GM10248 (cell line): ENCODE measurements at regions of chr21 and their contacts with region 1.

Region 1: DNA sequence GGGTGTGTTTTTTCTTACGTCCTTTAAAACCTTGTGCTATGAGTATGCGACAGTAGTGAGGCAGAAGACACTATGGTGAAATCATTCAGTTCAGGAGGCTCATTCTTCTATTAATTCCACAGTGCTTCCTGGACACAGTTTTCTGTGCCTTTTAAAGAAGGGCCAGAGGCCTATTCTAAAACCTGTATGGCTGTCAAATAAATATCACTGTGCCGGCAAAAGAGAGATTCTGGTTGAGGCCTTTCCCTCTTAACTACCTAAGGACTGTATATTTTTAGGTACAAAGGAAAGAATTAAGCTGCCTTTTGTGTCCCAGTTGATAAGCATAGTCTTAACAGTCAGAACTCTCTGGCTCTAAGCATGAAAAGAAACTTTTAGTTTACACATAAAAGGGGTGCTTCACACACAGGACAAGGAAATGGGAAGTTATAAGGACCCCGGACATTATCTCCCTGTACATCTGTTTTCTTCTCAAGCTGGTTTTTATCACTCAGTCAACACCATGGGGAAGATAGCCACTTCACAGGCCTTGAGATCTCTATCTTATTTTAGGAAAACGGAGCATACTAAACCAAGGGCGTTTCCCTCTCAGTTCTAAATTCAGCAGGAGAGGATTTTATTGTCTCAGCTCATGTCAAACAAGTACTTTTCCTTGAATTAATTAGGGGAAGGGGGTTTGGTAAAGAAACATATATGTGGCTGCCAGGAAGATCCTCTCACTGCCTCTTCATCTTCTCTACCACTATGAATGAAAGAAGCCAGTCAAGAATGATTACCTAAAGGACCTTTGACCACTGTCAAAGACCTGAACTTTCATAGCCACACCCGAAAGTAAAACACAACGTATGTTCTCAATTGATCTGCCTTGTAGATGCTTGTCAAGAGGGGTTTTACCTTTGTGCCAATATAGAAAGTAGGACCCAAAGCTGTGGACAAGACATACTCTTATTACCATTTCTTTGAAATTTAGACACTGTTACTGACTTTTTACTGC is 71.4 kb upstream of the HSPA13 start:
- DNase-seq: peak; percentile 24
- CTCF ChIP-seq: no peak

Region 2: GRCh38 chr21:14414932-14415508 is 39.3 kb before region 1 on chr21:
- CTCF ChIA-PET with region 1: no interaction called
- POLR2A ChIA-PET with region 1: no interaction called
- DNase-seq: no peak
- CTCF ChIP-seq: no peak

Region 3: DNA sequence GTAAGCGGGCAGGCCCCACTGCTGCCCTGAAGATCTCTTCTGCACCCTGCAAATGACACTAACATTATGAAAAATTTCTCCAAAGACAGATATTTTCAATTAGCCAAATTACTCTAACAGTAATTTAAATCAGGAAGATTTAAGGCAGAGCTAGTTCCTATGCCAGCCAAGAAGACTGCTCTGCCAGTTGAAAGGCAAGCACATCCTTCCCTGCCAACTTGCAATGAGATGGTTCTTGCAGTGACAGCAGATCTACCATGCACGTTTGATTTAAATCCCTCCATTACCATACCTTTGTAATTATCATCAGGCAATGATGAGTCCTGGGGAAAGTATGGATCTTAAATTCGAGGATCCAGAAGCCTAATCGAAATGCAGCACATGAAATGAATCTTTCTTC is 15.3 kb after region 1 on chr21:
- CTCF ChIA-PET with region 1: interaction called, 11 read pairs
- POLR2A ChIA-PET with region 1: interaction called, 3 read pairs
- DNase-seq: no peak
- CTCF ChIP-seq: no peak

Region 4: GRCh38 chr21:14477133-14477532 is 22.8 kb after region 1 on chr21:
- CTCF ChIA-PET with region 1: interaction called, 25 read pairs
- POLR2A ChIA-PET with region 1: interaction called, 26 read pairs
- DNase-seq: no peak
- CTCF ChIP-seq: no peak

Region 5: DNA sequence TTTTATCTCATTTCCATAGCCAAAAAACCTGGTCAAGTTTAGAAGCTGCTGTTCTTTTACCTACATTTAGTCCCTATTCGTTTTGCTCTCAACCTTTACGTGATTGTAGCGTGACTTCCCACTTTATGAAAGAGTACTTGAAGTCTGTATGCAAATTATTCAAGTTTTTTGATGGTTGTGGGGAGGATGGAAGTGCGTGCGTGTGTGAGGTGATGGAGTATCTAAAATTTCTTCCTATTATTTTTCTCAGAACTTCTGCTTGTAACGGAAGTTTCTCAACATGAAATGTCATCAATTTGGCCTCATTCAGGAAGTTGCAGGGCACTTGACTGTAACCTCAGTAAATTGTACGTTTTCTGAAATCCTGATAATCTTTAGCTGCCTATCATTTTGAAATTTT is 27.9 kb after region 1 on chr21:
- CTCF ChIA-PET with region 1: interaction called, 25 read pairs
- POLR2A ChIA-PET with region 1: interaction called, 26 read pairs
- DNase-seq: no peak
- CTCF ChIP-seq: no peak